ENCODE measurements at regions of chr2 and their contacts with region 1.

Region 1: GRCh38 chr2:25276569-25277465 is 64.9 kb downstream of the DNMT3A start:
- DNase-seq: peak; percentile 79
- ATAC-seq: peak; percentile 60
- H3K4me3 Mint-ChIP-seq: peak overlapping the region; percentile 65
- H3K27ac Mint-ChIP-seq: peak overlapping the region; percentile 96
- H3K4me1 Mint-ChIP-seq: peaks cover 78% of the 10 kb centered on the region
- H3K27me3 Mint-ChIP-seq: no peaks in the 10 kb centered on the region

Region 2: GRCh38 chr2:25032094-25032493 is 244.7 kb before region 1 on chr2:
- CTCF ChIA-PET with region 1: no interaction called
- POLR2A ChIA-PET with region 1: no interaction called
- DNase-seq: no peak
- ATAC-seq: no peak
- H3K4me3 Mint-ChIP-seq: no peak overlapping the region
- H3K27ac Mint-ChIP-seq: no peak overlapping the region
- H3K4me1 Mint-ChIP-seq: peaks cover 4% of the 10 kb centered on the region
- H3K27me3 Mint-ChIP-seq: peaks cover 10% of the 10 kb centered on the region

Region 3: DNA sequence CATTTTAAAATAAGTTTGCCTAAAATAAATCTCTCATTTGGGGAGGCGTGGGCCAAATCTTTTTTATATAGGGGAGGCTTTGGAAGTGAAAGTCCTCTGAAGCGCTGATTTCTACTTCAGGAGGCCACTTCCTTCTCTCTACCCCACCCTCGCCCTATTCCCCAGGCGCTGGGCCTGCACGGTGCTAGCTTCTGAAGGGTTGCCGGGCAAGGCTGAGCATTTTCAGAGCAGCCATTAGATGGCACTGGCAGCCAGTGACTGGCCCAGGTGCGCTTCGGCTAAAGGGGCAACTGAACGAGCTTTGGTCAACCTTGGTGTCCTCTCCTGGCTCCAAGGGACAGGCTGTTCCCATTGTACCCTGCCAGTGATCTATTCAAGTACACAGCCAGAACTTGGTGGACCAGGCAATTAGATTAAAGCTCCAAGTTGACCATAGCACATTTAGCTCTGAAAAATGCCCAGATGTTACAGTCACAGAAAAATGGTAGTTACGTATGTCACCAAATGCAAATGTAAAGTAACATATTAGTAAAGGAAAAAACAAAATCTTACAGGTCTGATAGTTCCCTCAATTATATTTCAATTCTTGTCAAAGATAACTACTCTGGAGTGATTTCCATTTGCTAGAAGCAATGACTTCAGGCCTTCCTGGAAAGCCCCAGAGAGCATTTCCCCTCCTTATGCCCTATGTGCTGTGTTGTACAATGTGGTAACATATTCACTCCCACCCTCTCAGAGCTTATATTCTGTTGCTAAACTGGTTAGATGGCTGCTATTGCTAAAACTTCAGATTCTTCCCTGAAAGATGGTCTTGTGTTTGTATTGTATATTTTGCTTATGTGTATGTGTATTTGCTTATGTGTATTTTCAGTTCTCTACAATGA is 110.6 kb before region 1 on chr2:
- CTCF ChIA-PET with region 1: interaction called, 12 read pairs
- POLR2A ChIA-PET with region 1: no interaction called
- DNase-seq: peak; percentile 70
- ATAC-seq: peak; percentile 68
- H3K4me3 Mint-ChIP-seq: no peak overlapping the region
- H3K27ac Mint-ChIP-seq: no peak overlapping the region
- H3K4me1 Mint-ChIP-seq: peaks cover 27% of the 10 kb centered on the region
- H3K27me3 Mint-ChIP-seq: peaks cover 47% of the 10 kb centered on the region

Region 4: GRCh38 chr2:25265802-25266201 is 11.0 kb before region 1 on chr2:
- CTCF ChIA-PET with region 1: interaction called, 15 read pairs
- POLR2A ChIA-PET with region 1: interaction called, 8 read pairs
- DNase-seq: no peak
- ATAC-seq: no peak
- H3K4me3 Mint-ChIP-seq: no peak overlapping the region
- H3K27ac Mint-ChIP-seq: no peak overlapping the region
- H3K4me1 Mint-ChIP-seq: peaks cover 15% of the 10 kb centered on the region
- H3K27me3 Mint-ChIP-seq: no peaks in the 10 kb centered on the region

Region 5: DNA sequence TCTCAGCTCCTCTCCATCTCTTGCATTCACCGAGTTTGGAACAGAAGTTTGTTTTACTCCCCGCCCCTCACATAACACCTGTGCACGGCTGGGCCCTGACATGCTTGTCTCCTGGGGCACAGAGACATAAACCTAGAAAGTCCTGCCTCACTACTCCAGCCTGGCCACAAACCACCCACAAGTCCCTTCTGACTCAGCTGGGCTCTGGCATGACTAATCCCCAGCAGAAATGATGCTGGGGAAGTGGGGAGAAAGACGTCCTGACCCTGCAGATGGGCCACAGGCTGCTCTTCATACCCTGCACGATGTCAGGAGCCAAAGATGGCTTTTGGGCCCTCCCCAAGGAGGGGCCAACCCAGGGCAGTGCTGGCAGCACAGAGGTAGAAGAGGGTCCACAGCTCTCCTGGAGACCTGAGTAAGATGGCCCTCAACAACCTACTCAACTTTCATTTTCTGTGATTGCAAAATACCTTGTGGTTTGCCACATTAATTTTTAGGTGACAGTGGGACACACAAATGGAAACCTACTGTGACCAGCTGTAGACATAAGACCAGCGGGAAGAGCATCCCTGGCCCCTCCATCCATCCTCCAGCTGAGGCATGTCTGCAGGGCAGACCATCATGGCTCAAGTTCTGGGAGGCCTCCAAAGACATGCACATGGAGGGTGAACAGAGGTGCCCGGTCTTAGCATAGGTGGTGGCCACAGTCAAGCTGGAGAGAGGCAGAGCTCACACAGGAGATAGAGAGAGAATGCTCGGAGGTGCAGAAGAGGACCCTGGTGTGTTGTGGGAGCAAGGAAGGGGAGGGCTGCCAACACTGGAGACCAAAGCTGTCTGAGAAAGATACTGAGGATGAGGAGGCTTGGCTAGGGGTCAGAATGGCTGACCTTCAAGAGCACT is 24.9 kb after region 1 on chr2:
- CTCF ChIA-PET with region 1: interaction called, 62 read pairs
- POLR2A ChIA-PET with region 1: interaction called, 49 read pairs
- DNase-seq: peak; percentile 86
- ATAC-seq: peak; percentile 89
- H3K4me3 Mint-ChIP-seq: peak overlapping the region; percentile 27
- H3K27ac Mint-ChIP-seq: peak overlapping the region; percentile 88
- H3K4me1 Mint-ChIP-seq: peaks cover 90% of the 10 kb centered on the region
- H3K27me3 Mint-ChIP-seq: no peaks in the 10 kb centered on the region

Region 6: DNA sequence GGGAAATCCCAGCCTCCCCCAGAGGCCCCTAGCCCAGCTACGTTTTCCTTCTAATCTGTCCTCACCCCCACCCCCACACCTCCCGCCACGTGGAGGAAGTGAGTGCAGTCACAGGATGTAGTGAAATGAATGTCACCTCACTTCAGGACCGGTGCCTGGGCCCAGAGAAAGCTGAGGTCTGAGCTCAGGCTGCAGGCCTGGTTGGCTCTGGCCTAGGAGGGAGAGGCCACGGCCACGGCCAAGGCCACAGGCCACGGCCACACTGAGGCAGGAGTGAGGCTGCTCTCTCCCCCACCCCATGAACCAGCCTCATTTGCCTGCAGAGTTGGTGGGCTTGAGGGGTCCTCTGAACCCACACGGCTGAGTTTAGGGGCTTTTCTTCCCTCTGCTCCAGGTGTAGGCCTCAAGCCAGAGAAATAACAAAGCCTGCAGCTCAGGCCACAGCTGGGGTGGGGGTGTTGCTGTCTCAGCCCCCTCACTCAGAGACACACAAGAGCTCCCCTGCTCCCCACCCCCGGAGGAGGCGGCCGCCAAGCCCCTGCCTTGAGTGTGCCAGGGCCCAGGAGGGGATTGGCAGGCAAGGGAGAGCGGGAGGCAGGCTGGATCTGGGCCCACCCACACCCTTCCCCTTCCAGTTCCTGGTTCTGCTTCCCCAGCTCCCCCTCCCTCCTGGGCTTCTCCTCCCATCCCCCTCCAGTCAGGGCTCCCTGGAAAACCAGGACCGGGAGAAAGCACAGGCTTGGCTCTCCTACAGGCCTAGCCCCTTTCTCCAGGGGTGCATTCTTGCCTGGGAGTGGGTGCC is 37.9 kb after region 1 on chr2:
- CTCF ChIA-PET with region 1: interaction called, 16 read pairs
- POLR2A ChIA-PET with region 1: interaction called, 15 read pairs
- DNase-seq: peak; percentile 88
- ATAC-seq: peak; percentile 84
- H3K4me3 Mint-ChIP-seq: peak overlapping the region; percentile 81
- H3K27ac Mint-ChIP-seq: peak overlapping the region; percentile 97
- H3K4me1 Mint-ChIP-seq: peaks cover 54% of the 10 kb centered on the region
- H3K27me3 Mint-ChIP-seq: no peaks in the 10 kb centered on the region

Region 7: DNA sequence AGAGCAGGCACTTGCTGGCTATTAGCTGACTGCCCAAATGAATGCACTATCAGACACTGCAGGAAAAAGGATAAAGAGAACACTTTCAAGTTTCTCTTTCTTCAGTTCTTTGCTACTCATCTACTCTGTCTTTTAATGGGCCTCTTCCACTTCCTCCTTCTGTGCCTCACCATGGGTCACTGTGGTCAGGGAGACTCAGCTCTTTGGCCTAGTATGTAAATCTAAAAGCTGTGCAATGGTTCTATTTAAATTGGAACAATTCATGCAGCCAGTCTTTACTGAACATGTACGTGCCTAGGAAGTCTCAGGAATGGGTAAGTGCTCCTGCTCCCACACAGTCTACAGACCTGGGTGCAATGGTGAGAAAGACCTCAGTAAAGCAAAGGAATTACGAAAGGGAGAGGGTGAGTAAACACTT is 144.0 kb after region 1 on chr2:
- CTCF ChIA-PET with region 1: no interaction called
- POLR2A ChIA-PET with region 1: no interaction called
- DNase-seq: no peak
- ATAC-seq: peak; percentile 30
- H3K4me3 Mint-ChIP-seq: no peak overlapping the region
- H3K27ac Mint-ChIP-seq: no peak overlapping the region
- H3K4me1 Mint-ChIP-seq: peaks cover 36% of the 10 kb centered on the region
- H3K27me3 Mint-ChIP-seq: no peaks in the 10 kb centered on the region